Activated CD4-positive, alpha-beta T cell treated with anti-CD3 and anti-CD28 coated beads for 36 hours (primary cell): ENCODE measurements at regions of chr5 and their contacts with region 1.

Region 1: GRCh38 chr5:180563994-180564393 is 27.3 kb downstream of the SCGB3A1 start:
- DNase-seq: peak; percentile 49
- ATAC-seq: peak; percentile 50
- H3K4me3 Mint-ChIP-seq: no peak overlapping the region
- H3K27ac Mint-ChIP-seq: no peak overlapping the region
- H3K4me1 Mint-ChIP-seq: peaks cover 35% of the 10 kb centered on the region
- H3K27me3 Mint-ChIP-seq: no peaks in the 10 kb centered on the region

Region 2: GRCh38 chr5:180575571-180575970 is 11.6 kb after region 1 on chr5:
- CTCF ChIA-PET with region 1: no interaction called
- POLR2A ChIA-PET with region 1: no interaction called
- intact Hi-C with region 1: loop called in 1 of 2 experiments (anchors 1 kb)
- DNase-seq: no peak
- ATAC-seq: peak; percentile 49
- H3K4me3 Mint-ChIP-seq: no peak overlapping the region
- H3K27ac Mint-ChIP-seq: no peak overlapping the region
- H3K4me1 Mint-ChIP-seq: peaks cover 12% of the 10 kb centered on the region
- H3K27me3 Mint-ChIP-seq: no peaks in the 10 kb centered on the region